ENCODE measurements at regions of chr7 and their contacts with region 1.

Region 1: GRCh38 chr7:786472-787255 is 45.6 kb upstream of the SUN1 start:
- DNase-seq: peak in 1 of 2 donors; percentile 83
- ATAC-seq: peak; percentile 90

Region 2: GRCh38 chr7:229184-229964 is 557.3 kb before region 1 on chr7:
- intact Hi-C with region 1: no loop called
- DNase-seq: peak; percentile 39 to 73
- ATAC-seq: peak; percentile 38

Region 3: GRCh38 chr7:266851-267840 is 519.5 kb before region 1 on chr7:
- intact Hi-C with region 1: no loop called
- DNase-seq: peak; percentile 52 to 79
- ATAC-seq: peak; percentile 55

Region 4: DNA sequence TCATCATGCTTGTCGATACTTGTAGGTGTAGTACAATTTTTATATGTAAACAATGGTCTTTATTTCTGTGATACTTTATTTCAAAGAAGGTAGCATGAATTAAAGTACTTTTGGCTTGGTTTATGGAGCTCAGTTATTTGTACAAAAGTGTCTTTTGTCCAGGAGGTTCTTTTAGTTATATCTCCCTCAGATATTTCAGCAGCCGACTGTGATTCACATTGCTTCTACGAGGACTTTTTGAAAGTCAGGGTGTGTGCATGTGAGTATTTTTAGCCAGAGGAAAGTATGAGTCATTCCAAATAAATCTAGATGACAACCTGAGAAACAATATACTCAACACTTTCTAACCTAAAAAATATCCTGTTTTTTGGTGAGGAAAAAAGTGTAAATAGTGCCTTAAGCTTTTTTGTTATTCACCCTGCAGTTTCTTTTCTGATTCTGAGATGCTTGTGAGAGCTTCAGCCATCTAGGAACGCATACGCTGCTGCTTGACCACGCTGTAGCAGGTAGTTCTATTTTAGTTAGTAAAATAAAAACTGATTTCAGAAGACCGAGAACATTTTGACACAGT is 45.0 kb after region 1 on chr7:
- intact Hi-C with region 1: loop called in 1 of 2 experiments (anchors 10 kb)
- DNase-seq: no peak
- ATAC-seq: peak; percentile 48

Region 5: DNA sequence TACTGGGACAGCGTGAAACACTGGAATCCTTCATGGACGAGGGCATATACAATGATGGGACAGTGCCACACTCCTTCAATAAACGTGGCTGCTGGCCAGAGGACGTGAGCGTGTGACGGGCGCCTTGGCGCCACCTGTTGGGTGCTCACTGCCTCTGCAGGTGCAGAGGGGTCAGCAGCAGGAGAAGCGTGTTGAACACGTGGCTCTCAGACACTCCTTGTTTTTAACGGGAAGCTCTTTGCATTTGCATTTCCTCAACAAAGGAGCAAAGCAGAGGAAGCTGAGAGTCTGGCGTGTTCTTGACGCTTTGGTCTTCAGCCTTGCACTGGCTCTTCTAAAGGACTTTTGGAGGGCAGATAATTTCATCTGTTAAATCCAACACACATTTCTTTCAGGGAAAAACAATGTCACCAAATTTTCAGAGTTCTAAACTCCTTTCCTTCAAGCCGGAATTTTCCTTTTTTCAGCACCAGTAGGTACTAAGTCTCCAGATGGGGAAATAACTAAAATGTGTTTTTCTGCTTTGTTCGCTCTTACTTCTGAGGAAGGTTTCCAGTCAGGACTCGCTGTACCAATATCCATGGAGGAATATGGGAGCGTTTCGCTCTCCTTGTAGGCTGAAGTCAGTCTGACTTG is 86.8 kb after region 1 on chr7:
- intact Hi-C with region 1: loop called in 1 of 2 experiments (anchors 2 kb)
- DNase-seq: peak; percentile 86 to 87
- ATAC-seq: peak; percentile 55

Region 6: GRCh38 chr7:901381-902154 is 114.9 kb after region 1 on chr7:
- intact Hi-C with region 1: no loop called
- DNase-seq: peak; percentile 93 to 97
- ATAC-seq: peak; percentile 81